Dendritic cell treated with granulocyte-macrophage colony-stimulating factor and Interleukin-4, amounts not matched to agents 40 ng/mL and 50 ng/mL, for 4 days (primary cell): ENCODE measurements at regions of chr2 and their contacts with region 1.

Region 1: GRCh38 chr2:204325468-204325867 is 219.8 kb upstream of the PARD3B start:
- H3K4me3 Mint-ChIP-seq: no peak overlapping the region
- H3K27ac Mint-ChIP-seq: no peak overlapping the region
- H3K4me1 Mint-ChIP-seq: no peaks in the 10 kb centered on the region
- H3K27me3 Mint-ChIP-seq: peaks cover 2% of the 10 kb centered on the region

Region 2: DNA sequence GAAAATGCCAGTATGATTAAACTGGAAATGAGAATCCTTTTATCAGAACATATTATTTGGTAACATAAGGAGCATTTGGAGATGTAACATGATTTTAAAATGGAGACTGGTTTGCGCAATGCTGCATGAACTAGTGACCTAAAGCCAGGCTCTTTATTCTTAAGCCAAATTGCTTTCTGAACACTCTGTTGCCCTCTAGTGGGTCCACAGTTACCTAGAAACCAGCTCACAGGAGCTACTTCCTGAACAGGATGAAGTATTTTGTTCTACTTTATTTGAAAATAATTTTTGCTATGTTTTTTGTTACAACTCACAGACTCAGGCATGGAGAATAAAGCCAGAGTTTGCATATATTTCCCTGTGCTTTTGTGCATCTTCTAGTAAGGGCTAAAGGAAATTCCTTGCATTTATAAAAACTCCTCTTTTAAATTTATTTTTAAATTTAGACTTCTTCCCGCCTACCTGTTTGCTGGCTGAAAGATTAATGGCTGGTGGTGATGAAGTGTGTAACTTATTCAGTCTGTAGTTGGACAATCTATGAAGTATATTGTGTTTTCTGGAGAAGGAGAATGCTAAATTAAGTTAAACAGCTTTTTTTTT is 366.5 kb after region 1 on chr2:
- intact Hi-C with region 1: loop called (anchors 10 kb)
- H3K4me3 Mint-ChIP-seq: no peak overlapping the region
- H3K27ac Mint-ChIP-seq: no peak overlapping the region
- H3K4me1 Mint-ChIP-seq: no peaks in the 10 kb centered on the region
- H3K27me3 Mint-ChIP-seq: no peaks in the 10 kb centered on the region

Region 3: DNA sequence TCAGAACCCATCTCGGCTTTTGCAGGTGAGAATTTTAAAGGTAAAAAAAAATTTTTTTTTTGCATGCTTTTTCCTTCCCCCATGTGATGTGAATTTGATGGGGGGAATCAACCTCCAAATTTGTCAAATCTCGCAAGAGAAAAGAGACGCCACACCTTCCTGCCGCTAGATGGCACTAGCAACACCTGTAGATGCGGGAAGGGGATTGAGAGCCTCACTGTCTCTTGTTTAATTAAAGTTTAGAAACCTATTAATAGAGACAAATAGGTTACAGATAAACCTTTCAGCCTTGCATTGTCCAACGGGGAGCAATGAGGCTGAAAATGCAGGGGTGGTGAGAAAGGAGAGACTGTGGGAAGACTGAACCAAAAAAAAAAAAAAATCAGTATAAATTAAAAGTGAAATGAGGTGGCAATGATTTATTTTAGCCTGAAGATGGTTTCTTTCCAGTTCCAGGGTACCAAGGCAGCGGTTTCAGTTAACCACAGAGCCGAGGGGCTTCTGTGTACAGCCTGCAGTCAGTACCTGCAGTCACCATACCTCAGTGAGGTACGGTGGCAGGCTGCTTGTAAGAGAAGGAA is 1441.4 kb after region 1 on chr2:
- intact Hi-C with region 1: loop called (anchors 10 kb)
- H3K4me3 Mint-ChIP-seq: no peak overlapping the region
- H3K27ac Mint-ChIP-seq: no peak overlapping the region
- H3K4me1 Mint-ChIP-seq: peaks cover 12% of the 10 kb centered on the region
- H3K27me3 Mint-ChIP-seq: peaks cover 38% of the 10 kb centered on the region

Region 4: DNA sequence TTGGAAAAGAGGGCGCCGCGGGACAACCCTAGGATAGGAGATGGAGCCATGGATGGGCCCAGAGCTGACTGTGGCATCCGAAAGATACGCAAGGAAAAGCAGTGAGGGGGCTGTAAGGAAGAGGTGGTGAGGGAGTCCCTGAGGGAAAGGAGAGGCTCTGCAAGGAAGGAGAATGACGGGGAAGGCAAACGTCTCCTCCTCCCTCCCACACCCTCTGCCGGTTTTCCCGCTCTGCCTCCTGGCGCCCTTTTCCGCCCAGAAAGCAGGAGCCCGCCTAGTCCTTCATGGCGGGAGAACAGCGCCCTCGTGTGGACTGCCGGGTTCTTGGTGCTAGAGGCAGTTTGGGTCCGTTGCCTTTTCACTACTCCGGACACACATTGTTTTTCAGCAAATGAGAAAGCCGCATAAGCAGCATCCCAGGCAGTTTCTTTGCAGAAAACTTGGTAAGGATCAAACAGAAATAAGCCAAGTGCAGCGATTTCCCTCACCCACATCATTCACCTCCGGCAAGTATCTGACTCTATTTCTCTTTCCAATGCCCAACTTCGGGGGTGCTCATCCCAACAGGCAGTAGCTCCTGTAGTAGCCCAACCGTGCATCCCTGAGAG is 1560.1 kb after region 1 on chr2:
- intact Hi-C with region 1: loop called (anchors 2 kb)
- H3K4me3 Mint-ChIP-seq: no peak overlapping the region
- H3K27ac Mint-ChIP-seq: no peak overlapping the region
- H3K4me1 Mint-ChIP-seq: no peaks in the 10 kb centered on the region
- H3K27me3 Mint-ChIP-seq: peaks cover 8% of the 10 kb centered on the region

Region 5: DNA sequence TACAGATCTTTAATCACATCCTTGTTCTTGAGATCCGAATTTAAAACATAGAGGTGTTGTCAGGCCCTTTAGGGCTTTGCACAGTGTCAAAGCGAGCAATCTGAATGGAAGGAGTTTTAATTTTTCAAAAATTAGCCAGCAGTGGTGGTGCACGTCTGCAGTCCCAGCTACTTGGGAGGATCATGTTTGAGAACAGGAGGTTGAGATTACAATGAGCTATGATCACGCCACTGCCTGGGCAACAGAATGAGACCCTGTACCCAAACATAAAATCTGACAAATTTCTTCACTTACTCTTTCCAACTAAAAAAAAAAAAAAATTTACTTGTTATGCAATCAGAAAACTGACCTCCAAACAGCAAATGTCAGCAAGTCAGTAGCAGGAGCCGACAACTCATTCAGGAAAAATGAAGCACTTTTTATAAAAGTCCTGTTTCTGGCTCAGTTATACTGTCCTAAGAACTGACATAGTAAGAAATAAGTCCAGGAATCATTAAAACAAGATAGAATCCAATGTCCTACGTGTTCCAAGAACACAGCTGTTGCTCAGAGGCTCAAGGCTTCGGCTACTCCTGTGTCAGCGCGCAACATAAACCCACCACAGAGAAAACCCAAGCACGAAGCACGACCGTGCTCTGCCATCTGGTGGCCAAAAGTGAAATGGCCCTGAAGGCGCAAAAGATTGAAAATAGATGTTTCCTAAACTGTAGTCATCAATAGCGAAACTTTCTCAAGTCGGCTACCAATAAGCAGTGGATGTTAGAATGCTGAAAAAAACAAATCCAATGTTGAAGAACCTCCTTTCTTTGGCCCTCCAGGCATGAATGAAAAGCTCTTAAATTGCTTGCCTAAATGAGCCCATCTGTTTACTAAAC is 1622.4 kb after region 1 on chr2:
- intact Hi-C with region 1: loop called (anchors 5 kb)
- H3K4me3 Mint-ChIP-seq: no peak overlapping the region
- H3K27ac Mint-ChIP-seq: no peak overlapping the region
- H3K4me1 Mint-ChIP-seq: peaks cover 22% of the 10 kb centered on the region
- H3K27me3 Mint-ChIP-seq: peaks cover 2% of the 10 kb centered on the region